ENCODE measurements at regions of chr4 and their contacts with region 1.

Region 1: DNA sequence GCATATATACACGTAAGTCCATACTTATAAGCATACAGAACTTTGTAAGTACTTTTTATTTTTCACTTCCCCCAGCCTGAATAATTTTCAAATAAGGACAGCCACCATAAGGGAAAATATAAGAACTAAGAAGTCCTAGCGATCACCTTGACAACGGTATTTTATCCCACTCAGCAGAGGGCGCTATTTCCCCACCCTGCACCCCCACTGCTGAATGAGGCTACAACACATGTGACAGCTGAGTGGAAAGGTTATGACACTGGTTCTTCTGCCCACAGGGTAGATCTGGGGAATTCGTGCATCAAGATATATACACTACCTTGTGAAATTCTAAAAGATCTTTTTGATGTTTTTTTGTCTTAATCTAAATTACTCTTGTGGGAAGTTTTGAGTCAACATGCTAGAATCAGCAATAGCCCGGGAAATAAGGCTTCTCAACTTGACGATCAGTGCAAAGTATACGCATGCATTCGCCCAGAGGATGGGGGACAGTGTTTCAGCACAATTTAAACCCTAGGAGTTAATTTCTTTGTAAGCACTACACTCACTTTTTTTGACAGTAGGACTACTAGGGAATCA is 151.5 kb downstream of the CORIN start:
- DNase-seq: peak; percentile 84
- ATAC-seq: peak; percentile 97
- H3K4me3 Mint-ChIP-seq: no peak overlapping the region
- H3K27ac Mint-ChIP-seq: no peak overlapping the region
- H3K4me1 Mint-ChIP-seq: peaks cover 2% of the 10 kb centered on the region
- H3K27me3 Mint-ChIP-seq: peaks cover 7% of the 10 kb centered on the region

Region 2: DNA sequence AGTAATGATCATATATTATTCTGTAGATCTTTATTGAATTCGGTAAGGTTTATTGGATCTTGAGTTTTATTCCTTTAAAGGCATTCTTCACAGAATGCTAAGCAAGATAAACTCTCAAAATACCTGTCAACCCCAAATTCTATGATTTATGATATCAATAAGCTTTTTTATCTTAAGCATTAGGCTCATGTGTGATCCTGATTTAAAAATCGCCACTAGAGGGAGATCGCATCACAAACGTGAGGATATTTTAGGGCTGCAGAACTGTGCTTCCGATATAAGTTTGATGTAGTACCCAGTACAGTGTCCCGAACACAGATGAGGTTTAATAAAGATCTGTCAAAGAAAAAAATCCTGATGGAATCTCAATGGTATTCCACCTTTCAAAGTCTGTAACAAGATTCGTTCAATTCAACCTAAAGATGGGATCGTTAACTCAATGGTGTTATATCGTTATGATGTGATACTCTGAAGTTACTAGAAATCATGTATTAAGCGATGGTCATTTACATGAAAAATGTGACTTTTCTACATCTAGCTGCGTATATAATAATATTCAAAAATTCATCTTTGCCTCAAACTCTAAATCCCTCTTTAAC is 17.5 kb before region 1 on chr4:
- CTCF ChIA-PET with region 1: interaction called, 13 read pairs
- POLR2A ChIA-PET with region 1: no interaction called
- intact Hi-C with region 1: no loop called
- DNase-seq: peak; percentile 15
- ATAC-seq: peak; percentile 47
- H3K4me3 Mint-ChIP-seq: no peak overlapping the region
- H3K27ac Mint-ChIP-seq: no peak overlapping the region
- H3K4me1 Mint-ChIP-seq: no peaks in the 10 kb centered on the region
- H3K27me3 Mint-ChIP-seq: peaks cover 17% of the 10 kb centered on the region

Region 3: GRCh38 chr4:47696823-47697222 is 10.4 kb after region 1 on chr4:
- CTCF ChIA-PET with region 1: interaction called, 10 read pairs
- POLR2A ChIA-PET with region 1: no interaction called
- intact Hi-C with region 1: no loop called
- DNase-seq: no peak
- ATAC-seq: no peak
- H3K4me3 Mint-ChIP-seq: no peak overlapping the region
- H3K27ac Mint-ChIP-seq: no peak overlapping the region
- H3K4me1 Mint-ChIP-seq: no peaks in the 10 kb centered on the region
- H3K27me3 Mint-ChIP-seq: peaks cover 26% of the 10 kb centered on the region

Region 4: DNA sequence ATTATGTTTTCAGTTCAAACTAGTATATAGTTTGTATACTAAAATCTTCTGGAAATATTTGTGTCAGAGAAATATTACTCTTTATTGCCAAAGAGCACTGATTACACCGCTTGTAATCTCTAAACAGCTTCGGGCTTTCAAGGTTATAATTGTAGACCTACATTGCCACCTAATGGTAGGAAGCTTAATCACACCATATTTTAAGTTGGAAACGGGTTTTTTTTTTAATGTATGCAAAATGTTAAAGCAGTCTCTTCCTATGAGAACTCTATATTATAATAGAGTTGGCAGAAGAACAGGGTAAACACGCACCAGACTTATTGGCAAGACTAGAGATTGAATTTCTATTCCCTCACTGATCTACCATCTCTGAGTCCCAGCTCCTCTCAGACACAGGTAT is 247.5 kb after region 1 on chr4:
- CTCF ChIA-PET with region 1: interaction called, 31 read pairs
- POLR2A ChIA-PET with region 1: no interaction called
- intact Hi-C with region 1: loop called (anchors 1 kb)
- DNase-seq: no peak
- ATAC-seq: peak; percentile 49
- H3K4me3 Mint-ChIP-seq: no peak overlapping the region
- H3K27ac Mint-ChIP-seq: no peak overlapping the region
- H3K4me1 Mint-ChIP-seq: no peaks in the 10 kb centered on the region
- H3K27me3 Mint-ChIP-seq: peaks cover 1% of the 10 kb centered on the region

Region 5: DNA sequence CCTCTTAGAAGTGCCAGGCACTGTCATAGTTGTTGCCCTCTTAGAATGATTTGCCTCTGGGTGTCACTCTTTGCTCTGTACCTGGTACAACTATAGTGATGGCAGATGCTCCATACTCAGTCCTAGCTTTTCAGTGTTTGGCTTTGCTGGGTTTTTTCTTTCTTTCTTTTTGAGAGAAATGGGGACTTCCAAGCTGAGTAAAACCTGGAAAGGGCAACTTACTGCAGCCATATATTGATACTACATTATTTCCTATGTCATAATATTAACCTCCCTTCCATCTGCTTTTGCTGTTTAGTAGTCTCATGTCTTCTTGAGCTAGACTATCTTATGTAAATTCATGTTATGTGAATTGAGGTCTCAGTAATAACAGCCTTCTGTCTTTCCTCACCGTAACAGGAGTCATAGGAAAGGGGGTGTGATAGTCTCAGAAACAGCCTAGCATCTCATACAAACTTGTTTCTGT is 379.2 kb after region 1 on chr4:
- CTCF ChIA-PET with region 1: no interaction called
- POLR2A ChIA-PET with region 1: no interaction called
- intact Hi-C with region 1: no loop called
- DNase-seq: peak; percentile 22
- ATAC-seq: peak; percentile 94
- H3K4me3 Mint-ChIP-seq: no peak overlapping the region
- H3K27ac Mint-ChIP-seq: no peak overlapping the region
- H3K4me1 Mint-ChIP-seq: peaks cover 23% of the 10 kb centered on the region
- H3K27me3 Mint-ChIP-seq: no peaks in the 10 kb centered on the region

Region 6: DNA sequence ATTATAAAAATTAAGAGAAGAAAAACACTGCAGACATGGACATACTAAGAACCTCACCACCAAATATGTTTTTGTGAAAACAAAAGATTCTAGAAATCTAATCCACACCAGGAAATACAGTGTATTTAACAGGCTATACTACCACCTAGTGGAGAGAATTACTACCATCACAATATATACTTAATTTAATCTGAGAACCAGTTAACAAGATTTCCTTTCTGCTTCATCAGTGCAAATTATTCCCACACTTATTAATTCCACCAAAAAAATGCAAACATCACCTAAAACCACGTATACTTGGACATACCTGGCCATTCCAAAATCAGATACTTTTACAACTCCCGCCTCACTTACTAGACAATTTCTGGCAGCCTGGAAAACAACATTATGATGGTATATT is 454.7 kb after region 1 on chr4:
- CTCF ChIA-PET with region 1: no interaction called
- POLR2A ChIA-PET with region 1: no interaction called
- intact Hi-C with region 1: loop called in 1 of 2 experiments (anchors 2 kb)
- DNase-seq: no peak
- ATAC-seq: peak; percentile 44
- H3K4me3 Mint-ChIP-seq: no peak overlapping the region
- H3K27ac Mint-ChIP-seq: no peak overlapping the region
- H3K4me1 Mint-ChIP-seq: peaks cover 47% of the 10 kb centered on the region
- H3K27me3 Mint-ChIP-seq: no peaks in the 10 kb centered on the region

Region 7: DNA sequence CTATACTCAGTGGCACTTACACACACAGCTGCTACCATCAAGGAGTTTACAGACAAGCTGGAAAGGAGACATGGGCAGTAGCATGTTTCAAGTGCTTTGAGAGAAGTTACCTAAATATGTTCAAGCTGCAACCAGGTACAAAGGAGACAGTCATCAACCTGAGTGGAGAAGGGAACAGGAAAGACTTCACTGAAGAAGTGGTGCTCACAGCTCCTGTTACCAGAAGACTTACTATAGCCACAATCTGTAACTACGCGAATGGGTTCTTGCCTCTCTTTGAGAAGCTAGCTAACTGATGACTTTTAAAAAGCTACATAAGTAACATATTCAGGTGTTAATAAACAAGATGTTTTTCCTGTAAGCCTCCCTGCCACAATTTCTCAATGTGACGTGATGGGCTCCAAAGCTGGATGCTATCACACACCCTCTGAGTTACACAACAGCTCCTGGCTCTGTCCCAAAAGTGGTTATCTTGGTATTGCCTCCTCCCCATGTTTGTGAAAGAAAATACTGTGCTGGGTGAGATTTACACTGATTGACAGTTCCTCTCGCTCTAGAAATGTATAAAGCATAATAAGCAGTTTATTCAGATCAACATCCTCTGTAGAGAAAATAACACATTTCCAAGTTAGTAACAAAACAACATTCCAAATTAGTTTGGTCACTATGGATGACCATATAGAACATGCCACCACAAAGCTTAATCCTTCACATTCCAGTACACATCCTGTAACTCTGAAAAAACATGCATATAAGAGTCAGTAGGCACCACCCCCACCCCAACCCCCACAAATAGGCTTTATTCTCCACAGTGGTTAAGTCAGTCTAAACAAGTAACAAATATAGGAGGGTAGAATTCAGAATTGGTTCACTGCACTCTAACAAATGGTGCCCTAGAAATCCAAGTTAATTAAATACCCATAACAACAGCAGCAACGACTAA is 1011.9 kb after region 1 on chr4:
- CTCF ChIA-PET with region 1: no interaction called
- POLR2A ChIA-PET with region 1: no interaction called
- intact Hi-C with region 1: no loop called
- DNase-seq: no peak
- ATAC-seq: no peak
- H3K4me3 Mint-ChIP-seq: no peak overlapping the region
- H3K27ac Mint-ChIP-seq: no peak overlapping the region
- H3K4me1 Mint-ChIP-seq: peaks cover 59% of the 10 kb centered on the region
- H3K27me3 Mint-ChIP-seq: no peaks in the 10 kb centered on the region